Right lobe of liver (tissue), 6 donors: ENCODE measurements at regions of chr15 and their contacts with region 1.

Region 1: GRCh38 chr15:84600851-84601838 is at the start of gene ZSCAN2:
- DNase-seq: peak; percentile 97 to 98 (median 97)
- ATAC-seq: peak; percentile 92 to 97 (median 94)
- H3K4me3 ChIP-seq: peak within 1 kb of the TSS; percentile 77 to 96 (median 90)
- H3K27ac ChIP-seq: peak within 1 kb of the TSS; percentile 54 to 87 (median 75)
- H3K4me1 ChIP-seq: peaks cover 0 to 26% (median 8%) of the 10 kb centered on the region in 4 donors
- H3K27me3 ChIP-seq: no peaks in the 10 kb centered on the region
- CTCF ChIP-seq: no peak
- POLR2A ChIP-seq: peak; percentile 58
- total RNA-seq, gene ZSCAN2: 4.5 to 8.7 (median 6.8) TPM

Region 2: GRCh38 chr15:84648539-84648938 is 47.4 kb after region 1 on chr15:
- intact Hi-C with region 1: loop called (anchors 5 to 10 kb)
- DNase-seq: peak in 2 of 3 donors; percentile 70 to 77
- ATAC-seq: peak; percentile 43 to 69 (median 54)
- H3K4me3 ChIP-seq: no peak overlapping the region
- H3K27ac ChIP-seq: no peak overlapping the region
- H3K4me1 ChIP-seq: peaks cover 0 to 5% (median 2%) of the 10 kb centered on the region in 4 donors
- H3K27me3 ChIP-seq: no peaks in the 10 kb centered on the region
- CTCF ChIP-seq: no peak
- POLR2A ChIP-seq: no peak

Region 3: DNA sequence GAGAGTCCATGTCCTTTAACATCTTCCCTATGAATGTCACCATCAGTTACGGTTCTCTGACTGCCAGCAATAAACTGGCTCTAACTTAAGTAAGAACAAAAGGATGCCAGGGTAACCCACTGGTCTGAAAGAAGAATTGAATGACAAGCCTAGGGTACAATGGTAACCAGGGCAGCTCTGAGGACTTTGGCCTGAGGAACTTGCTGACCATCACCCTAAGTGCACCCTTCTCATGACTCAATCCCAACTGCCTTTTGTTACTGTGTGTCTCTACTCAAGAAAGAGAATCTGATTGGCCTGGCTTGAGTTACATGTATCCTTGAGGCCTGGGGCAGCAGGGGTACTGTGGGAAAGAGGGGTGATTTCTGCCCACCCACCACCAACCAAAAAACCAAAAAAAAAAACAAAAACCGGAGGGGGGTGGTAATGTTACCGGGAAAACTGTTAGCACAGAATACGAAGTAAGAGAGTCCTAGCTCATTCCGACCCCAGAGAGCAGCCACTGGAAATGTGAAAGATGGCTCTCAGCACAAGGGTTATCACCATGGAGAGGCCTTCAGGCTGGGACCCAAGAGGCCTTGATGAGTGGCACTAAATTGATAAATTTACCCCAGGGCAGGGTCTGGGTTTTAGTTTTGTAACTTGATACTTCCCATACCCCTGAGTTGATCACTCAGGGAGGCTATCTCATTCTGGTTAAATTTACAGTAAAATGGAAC is 274.0 kb after region 1 on chr15:
- intact Hi-C with region 1: loop called in 1 of 2 experiments (anchors 5 kb)
- DNase-seq: no peak
- ATAC-seq: peak in 1 of 4 donors; percentile 15
- H3K4me3 ChIP-seq: no peak overlapping the region
- H3K27ac ChIP-seq: no peak overlapping the region
- H3K4me1 ChIP-seq: peaks cover 0 to 15% (median 0%) of the 10 kb centered on the region in 4 donors
- H3K27me3 ChIP-seq: no peaks in the 10 kb centered on the region
- CTCF ChIP-seq: no peak
- POLR2A ChIP-seq: no peak

Region 4: GRCh38 chr15:84929744-84930371 is 328.7 kb after region 1 on chr15:
- intact Hi-C with region 1: loop called in 1 of 2 experiments (anchors 10 kb)
- DNase-seq: peak in 2 of 3 donors; percentile 62 to 80
- ATAC-seq: peak in 3 of 4 donors; percentile 14 to 73 (median 18)
- H3K4me3 ChIP-seq: no peak overlapping the region
- H3K27ac ChIP-seq: no peak overlapping the region
- H3K4me1 ChIP-seq: peaks cover 0 to 11% (median 3%) of the 10 kb centered on the region in 4 donors
- H3K27me3 ChIP-seq: no peaks in the 10 kb centered on the region
- CTCF ChIP-seq: no peak
- POLR2A ChIP-seq: no peak